ENCODE measurements at regions of chr11 and their contacts with region 1.

Region 1: DNA sequence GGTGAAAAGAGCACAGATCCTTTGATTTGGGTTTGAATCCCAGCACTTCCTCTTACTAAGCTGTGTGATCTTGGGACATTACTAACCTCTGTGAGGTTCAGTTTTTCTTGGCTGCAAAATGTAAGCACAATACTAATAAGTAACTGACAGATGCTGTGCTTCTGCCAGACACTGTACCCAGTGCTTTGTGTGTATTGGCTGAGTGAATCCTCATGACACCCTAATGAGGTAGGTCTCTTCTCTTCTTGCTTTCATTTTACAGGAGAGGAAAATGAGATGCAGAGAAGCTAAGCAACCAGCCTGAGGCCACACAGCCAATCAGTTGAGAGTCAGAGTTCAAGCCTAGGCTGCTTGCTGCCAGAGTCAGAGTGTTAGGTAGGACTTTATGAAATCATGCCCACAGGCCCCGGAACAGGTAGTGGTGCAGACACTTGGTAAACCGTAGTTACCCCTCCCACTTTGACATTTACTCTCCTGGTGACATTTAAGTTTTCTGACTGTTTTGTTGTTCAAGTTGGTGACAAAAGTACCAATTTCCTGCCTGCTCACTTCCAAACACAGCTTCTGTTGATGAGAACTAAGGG is 21.2 kb downstream of the PTPRJ start:
- DNase-seq: peak; percentile 48 to 94 (median 84)
- ATAC-seq: peak; percentile 93 to 94
- H3K4me3 Mint-ChIP-seq: peak overlapping the region; percentile 47 to 86 (median 76)
- H3K27ac Mint-ChIP-seq: peak overlapping the region; percentile 94 to 99 (median 97)
- H3K4me1 Mint-ChIP-seq: peaks cover 35 to 97% (median 83%) of the 10 kb centered on the region in 4 donors
- H3K27me3 Mint-ChIP-seq: no peaks in the 10 kb centered on the region

Region 2: DNA sequence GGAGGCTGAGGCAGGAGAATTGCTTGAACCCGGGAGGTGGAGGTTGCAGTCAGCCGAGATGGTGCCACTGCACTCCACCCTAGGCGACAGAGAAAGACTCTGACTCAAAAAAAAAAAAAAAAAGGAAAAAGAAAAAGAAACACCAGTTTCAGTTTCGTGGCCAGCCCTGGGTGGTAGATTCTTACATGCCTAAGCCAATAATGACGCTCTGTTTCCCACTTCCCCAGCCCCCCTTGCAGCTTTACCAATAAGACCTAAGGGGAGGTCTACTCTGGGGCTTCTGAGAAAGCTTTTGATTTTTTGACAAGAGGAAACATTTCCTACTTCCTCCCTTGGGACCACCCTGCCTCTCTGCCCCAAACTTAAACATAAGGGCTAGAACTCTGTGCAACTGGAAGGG is 51.1 kb before region 1 on chr11:
- POLR2A ChIA-PET with region 1: interaction called, 13 read pairs
- DNase-seq: peak; percentile 39 to 89 (median 71)
- ATAC-seq: peak; percentile 98 to 100
- H3K4me3 Mint-ChIP-seq: peak overlapping the region; percentile 41 to 84 (median 72)
- H3K27ac Mint-ChIP-seq: peak overlapping the region; percentile 88 to 98 (median 95)
- H3K4me1 Mint-ChIP-seq: peaks cover 13 to 60% (median 50%) of the 10 kb centered on the region in 4 donors
- H3K27me3 Mint-ChIP-seq: no peaks in the 10 kb centered on the region

Region 3: DNA sequence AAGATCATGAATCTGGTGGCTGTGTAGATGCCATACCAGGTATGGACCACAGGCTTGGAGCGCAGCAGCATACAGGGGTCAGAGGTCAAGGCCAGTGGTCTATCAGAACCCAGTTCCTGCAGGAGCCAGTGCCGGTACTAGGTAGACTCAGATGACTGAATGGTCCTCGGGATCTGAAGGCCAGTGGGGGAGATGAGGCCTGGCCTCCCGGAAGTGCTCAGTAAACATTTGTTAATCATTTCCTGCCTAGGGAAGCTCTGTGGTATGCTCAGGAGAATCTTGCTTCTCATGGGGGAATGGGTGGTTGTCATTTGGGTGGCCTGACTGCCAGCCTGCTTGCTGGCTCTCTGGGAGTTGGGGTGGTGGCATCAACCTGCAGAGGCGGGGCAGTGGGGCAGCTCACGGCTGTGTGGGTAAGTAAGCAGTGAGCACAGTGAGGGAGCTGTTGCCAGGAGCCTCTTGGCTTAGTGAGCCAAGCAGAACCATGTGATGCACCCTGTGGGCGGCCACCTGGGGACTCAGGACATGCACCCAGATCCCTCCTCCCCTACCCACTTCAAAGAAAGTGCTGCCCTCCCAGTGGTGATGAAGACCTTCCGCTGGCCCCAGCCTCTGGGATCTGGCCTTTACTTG is 11.9 kb after region 1 on chr11:
- POLR2A ChIA-PET with region 1: interaction called, 38 read pairs
- DNase-seq: peak in 4 of 10 donors; percentile 6 to 65 (median 36)
- ATAC-seq: peak; percentile 31 to 56
- H3K4me3 Mint-ChIP-seq: peak overlapping the region; percentile 34 to 82 (median 62)
- H3K27ac Mint-ChIP-seq: peak overlapping the region; percentile 80 to 96 (median 92)
- H3K4me1 Mint-ChIP-seq: peaks cover 38 to 88% (median 69%) of the 10 kb centered on the region in 4 donors
- H3K27me3 Mint-ChIP-seq: no peaks in the 10 kb centered on the region

Region 4: DNA sequence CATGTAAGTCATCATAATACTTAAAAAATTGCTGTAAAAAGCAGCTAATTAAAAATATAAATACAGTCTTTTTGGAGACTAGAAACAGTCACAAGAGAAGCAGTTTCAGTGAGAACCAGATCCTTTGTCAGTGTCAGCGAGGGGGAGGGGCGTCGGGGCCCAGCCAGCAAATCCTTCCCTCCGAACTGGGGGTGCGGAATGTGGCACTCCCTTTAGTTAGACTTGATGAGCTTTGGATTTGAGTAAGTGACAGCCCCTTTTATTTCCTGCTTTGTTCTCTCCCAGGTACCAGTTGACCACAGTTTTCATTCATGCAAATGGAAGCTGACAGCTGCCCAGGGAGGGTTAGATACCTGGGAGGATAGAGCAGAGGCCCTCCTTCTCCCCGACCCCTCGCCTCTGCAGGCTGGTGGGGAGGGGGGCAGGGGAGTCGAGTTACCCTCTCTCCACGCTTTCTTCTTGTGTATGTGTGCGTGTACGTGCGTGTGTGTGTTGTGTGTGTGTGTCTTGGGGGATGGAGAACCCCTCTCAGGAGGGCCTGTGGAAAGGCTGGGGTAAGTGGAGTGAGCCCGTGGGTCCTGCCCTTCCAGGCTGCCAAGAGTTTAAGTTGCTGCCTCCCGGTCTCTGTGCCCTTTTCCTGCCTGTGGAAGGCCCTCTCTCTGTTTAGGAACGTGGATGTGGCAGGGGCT is 17.1 kb after region 1 on chr11:
- POLR2A ChIA-PET with region 1: interaction called, 38 read pairs
- DNase-seq: no peak
- ATAC-seq: no peak
- H3K4me3 Mint-ChIP-seq: peak overlapping the region in 2 of 10 donors; percentile 15 to 59
- H3K27ac Mint-ChIP-seq: peak overlapping the region in 9 of 10 donors; percentile 9 to 92 (median 75)
- H3K4me1 Mint-ChIP-seq: peaks cover 28 to 90% (median 61%) of the 10 kb centered on the region in 4 donors
- H3K27me3 Mint-ChIP-seq: no peaks in the 10 kb centered on the region

Region 5: DNA sequence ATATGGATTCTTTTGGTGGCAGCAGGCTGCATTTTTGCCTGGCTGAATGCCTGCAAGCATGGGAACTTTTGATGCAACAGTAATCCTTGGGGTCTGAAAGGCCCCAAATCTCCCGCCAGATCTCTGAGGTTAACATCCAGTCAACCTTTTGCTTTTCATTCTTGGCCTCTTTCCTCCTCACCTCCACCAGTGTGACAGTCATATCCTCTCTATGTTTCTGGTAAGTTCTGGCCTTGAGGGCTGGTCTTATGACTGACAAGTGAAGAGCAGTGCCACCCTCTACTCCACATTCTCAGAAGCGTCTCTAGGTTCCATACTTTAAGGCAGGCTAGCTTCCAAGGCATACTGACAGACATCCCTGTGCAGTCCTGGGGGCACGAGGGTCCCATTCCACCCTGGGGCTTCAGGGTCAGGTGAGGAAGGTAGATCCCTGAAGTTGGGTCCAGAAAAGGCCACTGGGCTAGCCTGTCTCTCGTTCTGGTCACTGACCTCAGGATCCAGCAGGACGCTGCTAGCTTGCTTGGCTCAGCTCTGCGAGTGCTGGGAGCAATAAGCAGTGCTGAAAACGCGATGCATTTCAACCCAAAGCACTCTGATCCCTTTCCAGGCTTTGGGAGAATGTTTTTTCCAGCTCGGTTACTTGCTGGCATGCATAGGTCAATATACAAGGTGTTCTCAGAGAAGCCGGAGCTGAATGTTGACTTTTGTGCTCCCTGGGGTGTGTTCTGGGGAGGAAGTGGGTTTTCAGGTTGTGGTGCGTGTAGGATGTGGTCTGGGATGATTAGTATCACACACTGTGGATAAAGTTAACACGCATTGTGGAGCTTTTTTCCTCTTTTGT is 54.0 kb after region 1 on chr11:
- POLR2A ChIA-PET with region 1: interaction called, 44 read pairs
- DNase-seq: peak in 9 of 10 donors; percentile 30 to 86 (median 61)
- ATAC-seq: peak; percentile 86 to 91
- H3K4me3 Mint-ChIP-seq: peak overlapping the region; percentile 52 to 87 (median 76)
- H3K27ac Mint-ChIP-seq: peak overlapping the region; percentile 51 to 87 (median 76)
- H3K4me1 Mint-ChIP-seq: peaks cover 28 to 89% (median 78%) of the 10 kb centered on the region in 4 donors
- H3K27me3 Mint-ChIP-seq: no peaks in the 10 kb centered on the region

Measured in naive thymus-derived CD8-positive, alpha-beta T cell (primary cell).